ENCODE measurements at regions of chr20 and their contacts with region 1.

Region 1: GRCh38 chr20:50575847-50576720 is 65.9 kb downstream of the PTPN1 start:
- DNase-seq: no peak
- H3K4me3 ChIP-seq: no peak overlapping the region
- H3K27ac ChIP-seq: peak overlapping the region; percentile 15 to 60 (median 50)
- H3K4me1 ChIP-seq: peaks cover 35 to 63% (median 55%) of the 10 kb centered on the region in 4 donors
- H3K27me3 ChIP-seq: no peaks in the 10 kb centered on the region
- CTCF ChIP-seq: peak; percentile 80 to 88 (median 84)
- EP300 ChIP-seq: no peak
- POLR2A ChIP-seq: no peak

Region 2: GRCh38 chr20:50509935-50510705 is 66.0 kb before region 1 on chr20 and contains the start of gene PTPN1:
- intact Hi-C with region 1: loop called (anchors 2 kb)
- DNase-seq: peak; percentile 100
- H3K4me3 ChIP-seq: peak within 1 kb of the TSS; percentile 72 to 94 (median 82)
- H3K27ac ChIP-seq: peak within 1 kb of the TSS; percentile 82 to 90 (median 87)
- H3K4me1 ChIP-seq: peaks cover 29 to 53% (median 50%) of the 10 kb centered on the region in 4 donors
- H3K27me3 ChIP-seq: no peaks in the 10 kb centered on the region
- CTCF ChIP-seq: peak in 1 of 3 experiments; percentile 11
- EP300 ChIP-seq: no peak
- POLR2A ChIP-seq: peak; percentile 97
- total RNA-seq, gene PTPN1: 21.2 to 49.0 (median 41.0) TPM

Measured in esophagus muscularis mucosa (tissue), 4 donors.